Spleen (tissue), 13 donors: ENCODE measurements at regions of chr4 and their contacts with region 1.

Region 1: GRCh38 chr4:55948726-55949474 is at the start of gene CEP135:
- DNase-seq: peak; percentile 99
- H3K4me3 ChIP-seq: peak within 1 kb of the TSS; percentile 85 to 96 (median 90)
- H3K27ac ChIP-seq: peak within 1 kb of the TSS; percentile 87 to 99 (median 98)
- H3K4me1 ChIP-seq: peaks cover 13 to 50% (median 37%) of the 10 kb centered on the region in 6 donors
- H3K27me3 ChIP-seq: no peaks in the 10 kb centered on the region
- CTCF ChIP-seq: peak; percentile 91 to 98 (median 96)
- POLR2A ChIP-seq: peak in 1 of 3 donors; percentile 15
- total RNA-seq, gene CEP135: 14.0 to 21.5 (median 14.6) TPM

Region 2: GRCh38 chr4:55853484-55854046 is 95.3 kb before region 1 on chr4 and contains the start of gene EXOC1:
- intact Hi-C with region 1: loop called (anchors 10 kb)
- DNase-seq: peak; percentile 99
- H3K4me3 ChIP-seq: peak within 1 kb of the TSS; percentile 69 to 90 (median 83)
- H3K27ac ChIP-seq: peak within 1 kb of the TSS; percentile 73 to 91 (median 87)
- H3K4me1 ChIP-seq: peaks cover 15 to 52% (median 27%) of the 10 kb centered on the region in 6 donors
- H3K27me3 ChIP-seq: peaks cover 0 to 6% (median 0%) of the 10 kb centered on the region in 7 donors
- CTCF ChIP-seq: peak in 1 of 11 experiments; percentile 26
- POLR2A ChIP-seq: peak in 1 of 3 donors; percentile 38
- total RNA-seq, gene EXOC1: 33.1 to 52.8 (median 46.2) TPM

Region 3: DNA sequence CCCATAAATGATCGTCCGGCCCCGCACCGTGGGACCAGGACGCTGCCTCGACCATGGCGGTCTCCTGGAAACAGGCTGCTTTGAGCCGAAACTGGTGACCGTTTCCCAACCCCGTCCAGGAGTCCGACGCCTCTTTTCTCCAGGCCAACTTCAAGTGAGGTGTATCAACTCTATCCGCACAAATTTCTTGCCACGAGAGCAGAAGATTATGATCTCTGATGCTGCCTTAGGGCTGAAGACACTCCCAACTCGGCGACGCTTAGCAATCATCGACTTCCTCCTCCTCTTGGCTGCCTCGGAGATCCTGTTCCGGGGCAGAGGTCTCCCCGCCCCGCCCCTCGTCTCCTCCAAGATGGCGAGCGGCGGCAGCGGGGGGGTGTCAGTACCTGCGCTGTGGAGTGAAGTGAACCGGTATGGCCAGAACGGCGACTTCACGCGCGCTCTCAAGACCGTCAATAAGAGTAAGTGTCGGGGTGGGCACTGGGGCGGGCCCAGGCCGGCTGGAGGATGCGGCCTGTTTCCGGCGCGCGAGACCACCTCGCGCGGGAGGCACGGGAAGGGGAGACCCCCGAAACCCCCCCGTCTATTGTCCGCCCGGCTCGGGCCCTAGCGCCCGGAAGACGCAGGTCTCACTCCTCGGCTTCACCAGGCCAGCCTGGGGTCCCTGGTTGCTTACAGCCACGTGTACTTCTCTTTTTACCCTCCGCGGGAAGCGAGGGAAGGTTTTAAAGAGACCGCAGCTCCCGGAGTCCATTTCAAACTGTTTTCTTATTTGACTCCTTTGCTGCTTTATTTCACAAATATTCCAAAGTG is 518.6 kb after region 1 on chr4 and contains the start of gene SRP72:
- intact Hi-C with region 1: loop called (anchors 10 kb)
- DNase-seq: peak; percentile 97
- H3K4me3 ChIP-seq: peak within 1 kb of the TSS; percentile 94 to 99 (median 96)
- H3K27ac ChIP-seq: peak within 1 kb of the TSS; percentile 85 to 95 (median 92)
- H3K4me1 ChIP-seq: peaks cover 30 to 70% (median 51%) of the 10 kb centered on the region in 6 donors
- H3K27me3 ChIP-seq: no peaks in the 10 kb centered on the region
- CTCF ChIP-seq: peak in 1 of 11 experiments; percentile 12
- POLR2A ChIP-seq: peak in 2 of 3 donors; percentile 43 to 52
- total RNA-seq, gene SRP72: 65.3 to 97.7 (median 82.8) TPM